Dendritic cell treated with granulocyte-macrophage colony-stimulating factor and Interleukin-4, amounts not matched to agents 40 ng/mL and 50 ng/mL, for 4 days (primary cell): ENCODE measurements at regions of chr12 and their contacts with region 1.

Region 1: DNA sequence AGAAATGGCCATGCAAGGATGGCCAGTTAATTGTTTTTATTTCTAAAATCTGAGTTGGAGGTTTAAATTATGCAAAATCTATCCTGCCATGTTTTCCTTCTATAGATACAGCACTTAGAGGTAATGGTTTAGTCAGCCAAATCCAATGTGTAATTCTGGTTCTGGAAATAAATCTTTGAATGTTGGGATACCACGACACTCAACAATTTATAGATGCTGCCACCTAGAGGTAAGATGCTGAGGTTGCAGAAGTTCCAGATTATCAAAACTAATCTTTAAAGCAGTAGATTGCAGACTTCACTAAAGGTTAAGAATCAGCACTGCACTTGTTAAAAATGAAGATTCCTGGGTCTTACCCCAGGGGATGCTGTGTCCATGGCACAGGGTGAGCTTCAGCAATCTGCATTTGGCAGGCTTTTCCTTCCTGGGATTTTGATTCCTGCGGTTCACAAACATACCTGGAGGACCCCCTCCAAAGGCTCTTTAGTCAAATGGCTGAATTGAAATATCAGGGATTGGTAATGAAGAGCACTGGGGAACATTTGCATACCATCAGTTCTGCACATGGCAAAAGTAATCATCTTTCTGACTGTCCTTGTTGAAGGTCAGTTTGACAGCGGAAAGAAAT is 53.4 kb upstream of the ANO4 start:
- H3K4me3 Mint-ChIP-seq: no peak overlapping the region
- H3K27ac Mint-ChIP-seq: no peak overlapping the region
- H3K4me1 Mint-ChIP-seq: no peaks in the 10 kb centered on the region
- H3K27me3 Mint-ChIP-seq: peaks cover 2% of the 10 kb centered on the region

Region 2: GRCh38 chr12:100391856-100392255 is 349.3 kb before region 1 on chr12:
- intact Hi-C with region 1: loop called (anchors 5 kb)
- H3K4me3 Mint-ChIP-seq: no peak overlapping the region
- H3K27ac Mint-ChIP-seq: no peak overlapping the region
- H3K4me1 Mint-ChIP-seq: no peaks in the 10 kb centered on the region
- H3K27me3 Mint-ChIP-seq: no peaks in the 10 kb centered on the region